Heart left ventricle (tissue), 16 donors: ENCODE measurements at regions of chr17 and their contacts with region 1.

Region 1: DNA sequence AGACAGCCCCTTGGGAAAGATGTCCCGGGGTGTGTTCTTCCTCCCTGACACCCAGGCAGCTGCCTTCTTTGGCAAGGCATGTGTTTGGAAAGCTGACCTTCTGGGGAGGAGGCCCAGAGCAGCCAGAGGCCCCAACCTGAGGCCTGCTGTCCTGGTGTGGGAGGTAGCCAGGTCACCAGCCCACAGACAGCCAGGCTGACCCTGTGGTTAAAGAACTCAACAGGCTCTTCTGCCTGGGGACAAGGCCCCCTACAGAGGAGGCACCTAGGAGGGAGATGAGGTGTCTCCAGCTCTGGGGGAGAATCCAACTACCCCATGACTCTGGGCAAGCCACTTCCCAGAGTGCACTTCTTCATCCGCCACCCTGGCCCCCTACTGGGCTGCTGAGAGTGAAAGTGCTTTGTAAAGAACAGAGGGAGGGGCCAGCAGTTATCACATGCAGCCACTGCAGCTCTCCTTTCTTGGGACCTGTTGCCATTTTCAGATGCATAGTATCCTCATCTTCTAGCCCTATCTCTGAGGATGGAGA is 13.1 kb upstream of the SREBF1 start:
- DNase-seq: peak in 4 of 5 donors; percentile 59 to 70 (median 64)
- ATAC-seq: peak; percentile 62 to 80 (median 65)
- H3K4me3 ChIP-seq: no peak overlapping the region
- H3K27ac ChIP-seq: peak overlapping the region; percentile 51 to 95 (median 81)
- H3K4me1 ChIP-seq: peaks cover 10 to 53% (median 35%) of the 10 kb centered on the region in 12 donors
- H3K27me3 ChIP-seq: no peaks in the 10 kb centered on the region
- CTCF ChIP-seq: peak in 11 of 12 donors; percentile 5 to 53 (median 27)
- POLR2A ChIP-seq: no peak

Region 2: DNA sequence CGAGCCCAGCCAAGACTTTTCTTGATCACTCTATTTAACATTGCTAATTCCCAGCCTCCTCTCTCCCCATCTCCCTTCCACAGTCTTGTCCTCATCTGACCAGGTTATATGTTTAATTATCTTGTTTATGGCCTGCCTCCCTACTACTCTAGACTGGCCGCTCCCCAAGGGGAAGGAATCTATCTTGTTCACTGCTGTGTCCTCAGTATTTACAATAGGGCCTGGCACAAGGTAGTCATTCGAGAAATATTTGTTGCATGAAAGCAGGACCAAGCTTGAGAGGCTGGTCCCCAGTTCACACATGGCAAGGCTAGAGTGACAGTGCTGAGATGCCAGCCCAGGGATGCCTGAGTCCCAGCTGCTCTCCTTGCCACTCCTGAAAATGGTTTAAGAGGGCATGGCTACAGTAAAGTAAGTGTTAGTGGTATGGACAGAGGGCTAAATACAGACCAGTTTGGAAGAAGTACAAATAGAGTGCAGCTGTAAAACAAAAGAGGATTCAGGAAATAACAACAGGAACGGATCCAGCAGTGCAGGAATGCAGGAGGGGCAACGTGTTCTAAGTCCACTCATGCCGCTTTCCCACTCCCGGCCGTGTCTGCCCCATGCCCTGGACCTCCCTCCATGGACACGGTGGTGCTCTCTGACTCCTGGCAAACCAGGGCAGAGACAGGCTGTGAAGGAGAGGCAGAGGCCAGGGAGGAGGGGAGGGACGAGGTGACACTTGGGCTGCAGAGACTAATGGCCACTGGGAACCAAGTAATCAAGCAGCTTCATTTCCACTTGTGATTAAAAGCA is 56.7 kb after region 1 on chr17:
- intact Hi-C with region 1: loop called in 1 of 10 experiments (anchors 5 kb)
- DNase-seq: no peak
- ATAC-seq: peak in 1 of 4 donors; percentile 36
- H3K4me3 ChIP-seq: no peak overlapping the region
- H3K27ac ChIP-seq: peak overlapping the region in 1 of 12 donors; percentile 14
- H3K4me1 ChIP-seq: peaks cover 0 to 53% (median 31%) of the 10 kb centered on the region in 12 donors
- H3K27me3 ChIP-seq: no peaks in the 10 kb centered on the region
- CTCF ChIP-seq: no peak
- POLR2A ChIP-seq: no peak